Esophagus muscularis mucosa (tissue), 4 donors: ENCODE measurements at regions of chr9 and their contacts with region 1.

Region 1: GRCh38 chr9:97982683-97983588 is at the start of gene ANP32B:
- DNase-seq: peak; percentile 95
- H3K4me3 ChIP-seq: peak within 1 kb of the TSS; percentile 93 to 100 (median 96)
- H3K27ac ChIP-seq: peak within 1 kb of the TSS; percentile 98 to 100 (median 99)
- H3K4me1 ChIP-seq: peaks cover 38 to 66% (median 63%) of the 10 kb centered on the region in 4 donors
- H3K27me3 ChIP-seq: no peaks in the 10 kb centered on the region
- CTCF ChIP-seq: peak; percentile 90 to 97 (median 93)
- EP300 ChIP-seq: no peak
- POLR2A ChIP-seq: no peak
- total RNA-seq, gene ANP32B: 30.2 to 52.7 (median 39.9) TPM

Region 2: GRCh38 chr9:97921959-97922724 is 60.8 kb before region 1 on chr9 and contains the start of gene TRMO:
- intact Hi-C with region 1: loop called (anchors 2 kb)
- DNase-seq: peak; percentile 100
- H3K4me3 ChIP-seq: peak within 1 kb of the TSS; percentile 69 to 81 (median 72)
- H3K27ac ChIP-seq: peak within 1 kb of the TSS; percentile 95 to 99 (median 96)
- H3K4me1 ChIP-seq: peaks cover 16 to 47% (median 27%) of the 10 kb centered on the region in 4 donors
- H3K27me3 ChIP-seq: peaks cover 0 to 7% (median 0%) of the 10 kb centered on the region in 4 donors
- CTCF ChIP-seq: peak; percentile 58 to 75 (median 64)
- EP300 ChIP-seq: no peak
- POLR2A ChIP-seq: peak; percentile 64
- total RNA-seq, gene TRMO: 16.6 to 22.7 (median 18.8) TPM

Region 3: DNA sequence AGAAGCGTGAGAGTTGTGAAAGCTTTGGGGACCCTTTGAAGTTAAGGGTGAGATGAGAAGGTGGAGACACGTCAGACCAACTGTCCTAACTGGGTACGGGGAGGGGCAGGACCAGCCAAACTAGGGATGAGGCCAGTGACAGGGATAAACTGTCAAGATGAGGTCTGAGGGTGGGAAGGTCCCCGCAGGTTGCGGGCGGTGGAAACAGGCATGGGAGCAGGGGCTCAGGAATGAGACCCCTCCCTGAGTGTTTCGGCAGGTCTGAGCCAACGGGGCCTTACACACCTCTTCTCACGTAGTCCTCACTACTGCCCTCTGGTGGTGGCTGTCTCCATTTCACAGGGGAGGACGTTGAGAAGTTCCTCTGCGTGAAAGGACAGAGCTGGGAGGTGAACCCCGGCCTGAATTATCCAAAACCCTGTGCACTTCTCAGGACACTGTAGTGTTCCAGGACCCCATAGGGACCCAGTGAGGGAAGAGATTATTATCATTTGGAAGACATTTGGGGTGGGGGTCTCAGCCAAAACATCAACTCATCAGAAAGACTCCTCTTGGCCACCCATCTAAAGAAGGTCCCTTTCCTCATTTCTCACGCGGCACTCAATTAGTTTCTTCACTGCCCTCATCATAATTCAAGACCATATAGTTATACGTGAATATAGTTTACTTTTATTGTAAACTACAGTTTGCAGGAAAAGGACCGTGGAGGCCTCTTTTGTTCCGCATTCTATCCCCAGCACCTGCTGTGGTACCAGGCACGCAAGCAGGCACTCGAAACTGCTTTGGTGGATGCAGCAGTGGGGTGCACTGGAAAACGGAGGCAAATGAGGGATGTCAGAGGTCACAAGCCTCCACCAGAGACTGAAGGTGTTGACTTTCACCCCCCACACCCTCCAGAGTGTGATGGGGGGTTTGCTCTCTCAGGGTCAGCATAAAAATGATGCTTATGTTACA is 51.9 kb after region 1 on chr9:
- intact Hi-C with region 1: loop called (anchors 5 kb)
- DNase-seq: peak; percentile 98
- H3K4me3 ChIP-seq: peak overlapping the region in 2 of 4 donors; percentile 20 to 24
- H3K27ac ChIP-seq: no peak overlapping the region
- H3K4me1 ChIP-seq: peaks cover 0 to 10% (median 6%) of the 10 kb centered on the region in 4 donors
- H3K27me3 ChIP-seq: no peaks in the 10 kb centered on the region
- CTCF ChIP-seq: peak; percentile 78 to 89 (median 85)
- EP300 ChIP-seq: no peak
- POLR2A ChIP-seq: no peak

Region 4: DNA sequence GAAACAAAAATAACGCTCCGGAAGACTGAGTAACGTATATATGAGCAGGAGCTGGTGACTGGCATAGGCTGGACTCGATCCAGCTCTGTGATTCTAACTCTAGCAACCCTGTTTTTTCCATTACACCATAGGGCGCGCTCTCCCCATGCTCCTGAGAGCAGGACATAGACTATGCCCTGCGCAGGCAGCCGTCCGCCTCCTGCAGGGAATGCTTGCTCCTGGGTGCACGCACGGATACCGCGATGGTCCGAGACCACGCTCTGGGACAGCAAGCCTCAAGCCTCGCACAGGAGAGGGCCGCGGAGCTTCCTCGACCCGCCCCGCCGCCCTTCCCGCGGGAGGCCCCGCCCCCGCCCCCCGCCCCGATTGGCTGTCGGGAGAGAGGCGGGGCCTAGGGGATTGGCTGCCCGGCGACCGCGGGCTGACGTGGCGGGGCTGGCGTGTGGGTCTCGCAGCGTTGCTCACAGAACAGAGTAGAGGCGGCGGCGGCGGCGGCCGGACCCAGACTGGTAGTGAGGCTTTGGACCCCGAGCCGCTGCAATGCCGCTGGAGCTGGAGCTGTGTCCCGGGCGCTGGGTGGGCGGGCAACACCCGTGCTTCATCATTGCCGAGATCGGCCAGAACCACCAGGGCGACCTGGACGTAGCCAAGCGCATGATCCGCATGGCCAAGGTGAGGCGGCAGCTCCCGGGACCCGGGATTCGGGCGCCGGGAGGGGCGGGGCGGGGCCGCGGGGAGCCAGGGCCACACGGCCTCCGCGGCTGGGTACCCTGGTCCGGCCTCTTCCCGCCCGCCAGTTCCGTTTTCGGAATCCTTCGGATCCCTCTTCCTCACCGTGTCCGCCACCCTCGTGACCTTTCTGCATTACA is 73.6 kb after region 1 on chr9 and contains the start of gene NANS:
- intact Hi-C with region 1: loop called (anchors 2 kb)
- DNase-seq: peak; percentile 97
- H3K4me3 ChIP-seq: peak within 1 kb of the TSS; percentile 71 to 89 (median 77)
- H3K27ac ChIP-seq: peak within 1 kb of the TSS; percentile 87 to 98 (median 94)
- H3K4me1 ChIP-seq: peaks cover 14 to 39% (median 24%) of the 10 kb centered on the region in 4 donors
- H3K27me3 ChIP-seq: no peaks in the 10 kb centered on the region
- CTCF ChIP-seq: no peak
- EP300 ChIP-seq: no peak
- POLR2A ChIP-seq: peak; percentile 86
- total RNA-seq, gene NANS: 25.3 to 54.7 (median 37.3) TPM

Region 5: GRCh38 chr9:98255578-98256296 is 272.8 kb after region 1 on chr9 and contains the start of gene TBC1D2:
- intact Hi-C with region 1: loop called (anchors 5 kb)
- DNase-seq: peak; percentile 98
- H3K4me3 ChIP-seq: peak within 1 kb of the TSS; percentile 80 to 94 (median 90)
- H3K27ac ChIP-seq: peak within 1 kb of the TSS; percentile 92 to 96 (median 96)
- H3K4me1 ChIP-seq: peaks cover 26 to 44% (median 30%) of the 10 kb centered on the region in 4 donors
- H3K27me3 ChIP-seq: no peaks in the 10 kb centered on the region
- CTCF ChIP-seq: peak in 2 of 3 experiments; percentile 21 to 24
- EP300 ChIP-seq: no peak
- POLR2A ChIP-seq: peak; percentile 23
- total RNA-seq, gene TBC1D2: 5.0 to 12.4 (median 7.3) TPM